A673 (cell line): ENCODE measurements at regions of chr6 and their contacts with region 1.

Region 1: GRCh38 chr6:103122766-103123601 is 1729.5 kb downstream of the GRIK2 start:
- DNase-seq: peak; percentile 87
- H3K4me3 ChIP-seq: no peak overlapping the region
- H3K27ac ChIP-seq: no peak overlapping the region
- H3K4me1 ChIP-seq: peaks cover 6% of the 10 kb centered on the region
- H3K27me3 ChIP-seq: no peaks in the 10 kb centered on the region
- CTCF ChIP-seq: peak; percentile 78

Region 2: DNA sequence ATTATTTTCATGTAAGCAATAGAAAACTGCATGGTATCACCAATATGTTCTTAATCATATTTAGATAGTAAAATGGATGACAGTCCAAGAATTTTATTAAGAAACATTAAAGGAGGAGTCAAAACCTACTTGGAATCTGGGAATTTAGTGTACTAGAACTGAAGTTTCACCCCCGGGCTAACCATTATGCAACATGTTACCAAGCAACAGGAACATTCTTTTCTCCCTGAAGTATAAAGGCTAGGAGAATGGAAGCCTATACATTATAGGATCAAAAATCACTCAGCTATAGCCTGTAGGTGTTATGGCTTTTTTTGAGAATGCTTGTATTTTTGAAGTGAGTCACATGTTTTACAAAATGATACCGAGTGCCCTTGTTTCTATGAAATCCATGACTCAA is 1191.2 kb before region 1 on chr6:
- CTCF ChIA-PET with region 1: no interaction called
- POLR2A ChIA-PET with region 1: no interaction called
- intact Hi-C with region 1: loop called (anchors 10 kb)
- DNase-seq: peak; percentile 72
- H3K4me3 ChIP-seq: peak overlapping the region; percentile 50
- H3K27ac ChIP-seq: peak overlapping the region; percentile 96
- H3K4me1 ChIP-seq: peaks cover 21% of the 10 kb centered on the region
- H3K27me3 ChIP-seq: no peaks in the 10 kb centered on the region
- CTCF ChIP-seq: no peak

Region 3: DNA sequence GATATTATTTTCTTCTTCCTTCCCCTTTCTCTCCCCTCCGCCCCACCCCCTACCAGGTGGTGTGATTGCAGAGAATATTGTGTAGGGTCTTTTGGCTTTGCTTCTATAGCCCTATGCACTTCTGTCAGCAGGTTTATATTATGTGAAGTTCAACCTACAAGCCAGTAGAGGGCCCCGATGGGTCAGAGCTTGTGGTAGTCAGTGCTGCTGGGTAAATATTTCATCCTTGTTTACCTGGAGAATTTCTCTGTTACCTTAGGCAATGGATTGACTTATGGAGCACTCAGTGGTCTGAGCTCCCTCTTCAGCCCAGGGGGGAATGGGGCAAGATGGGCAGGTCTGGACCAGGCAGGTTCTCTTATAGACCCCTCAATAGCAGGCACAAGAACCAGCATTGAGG is 1008.6 kb before region 1 on chr6:
- CTCF ChIA-PET with region 1: no interaction called
- POLR2A ChIA-PET with region 1: no interaction called
- intact Hi-C with region 1: loop called (anchors 10 kb)
- DNase-seq: peak; percentile 48
- H3K4me3 ChIP-seq: no peak overlapping the region
- H3K27ac ChIP-seq: no peak overlapping the region
- H3K4me1 ChIP-seq: no peaks in the 10 kb centered on the region
- H3K27me3 ChIP-seq: no peaks in the 10 kb centered on the region
- CTCF ChIP-seq: peak; percentile 65

Region 4: DNA sequence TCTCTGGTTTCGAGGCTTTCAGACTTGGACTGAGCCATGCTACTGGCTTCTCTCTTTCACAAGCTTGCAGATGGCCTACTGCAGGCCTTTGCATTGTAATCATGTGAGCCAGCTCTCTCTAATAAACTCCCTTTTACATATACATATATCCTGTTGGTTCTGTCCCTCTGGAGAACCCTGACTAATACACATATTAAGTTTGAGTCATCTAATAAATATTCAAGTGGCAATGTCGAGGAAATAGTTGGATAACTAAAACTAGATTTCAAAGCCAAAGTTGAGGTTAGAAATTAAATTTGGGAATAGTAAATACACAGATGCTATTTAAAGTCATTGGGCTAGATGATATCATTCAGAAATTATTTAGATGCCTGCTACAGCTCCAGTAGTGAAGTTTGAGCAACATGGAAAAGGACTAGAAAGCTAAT is 386.0 kb before region 1 on chr6:
- CTCF ChIA-PET with region 1: no interaction called
- POLR2A ChIA-PET with region 1: no interaction called
- intact Hi-C with region 1: no loop called
- DNase-seq: peak; percentile 74
- H3K4me3 ChIP-seq: no peak overlapping the region
- H3K27ac ChIP-seq: peak overlapping the region; percentile 63
- H3K4me1 ChIP-seq: peaks cover 18% of the 10 kb centered on the region
- H3K27me3 ChIP-seq: no peaks in the 10 kb centered on the region
- CTCF ChIP-seq: no peak

Region 5: DNA sequence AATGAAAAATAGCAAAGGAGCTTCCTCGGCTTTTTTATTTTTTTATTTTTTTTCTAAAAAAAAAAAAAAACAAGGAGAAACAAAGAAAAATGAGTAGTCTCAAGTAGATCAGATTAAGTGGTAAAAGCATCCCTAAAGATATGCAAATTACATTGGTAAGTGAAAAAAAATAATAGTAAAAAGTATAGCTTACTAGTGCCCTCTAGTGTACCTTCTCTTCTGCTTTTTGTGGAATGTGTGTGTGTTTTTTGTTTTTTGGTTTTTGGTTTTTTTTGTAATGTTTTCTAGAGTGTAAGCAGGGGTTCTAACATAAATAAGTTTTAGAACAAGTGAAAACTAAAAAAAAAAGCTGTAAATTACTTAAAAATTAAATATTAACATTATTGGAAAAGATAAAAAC is 674.8 kb after region 1 on chr6:
- CTCF ChIA-PET with region 1: no interaction called
- POLR2A ChIA-PET with region 1: no interaction called
- intact Hi-C with region 1: loop called (anchors 10 kb)
- DNase-seq: peak; percentile 69
- H3K4me3 ChIP-seq: no peak overlapping the region
- H3K27ac ChIP-seq: no peak overlapping the region
- H3K4me1 ChIP-seq: no peaks in the 10 kb centered on the region
- H3K27me3 ChIP-seq: no peaks in the 10 kb centered on the region
- CTCF ChIP-seq: peak; percentile 73